ENCODE measurements at regions of chr20 and their contacts with region 1.

Region 1: DNA sequence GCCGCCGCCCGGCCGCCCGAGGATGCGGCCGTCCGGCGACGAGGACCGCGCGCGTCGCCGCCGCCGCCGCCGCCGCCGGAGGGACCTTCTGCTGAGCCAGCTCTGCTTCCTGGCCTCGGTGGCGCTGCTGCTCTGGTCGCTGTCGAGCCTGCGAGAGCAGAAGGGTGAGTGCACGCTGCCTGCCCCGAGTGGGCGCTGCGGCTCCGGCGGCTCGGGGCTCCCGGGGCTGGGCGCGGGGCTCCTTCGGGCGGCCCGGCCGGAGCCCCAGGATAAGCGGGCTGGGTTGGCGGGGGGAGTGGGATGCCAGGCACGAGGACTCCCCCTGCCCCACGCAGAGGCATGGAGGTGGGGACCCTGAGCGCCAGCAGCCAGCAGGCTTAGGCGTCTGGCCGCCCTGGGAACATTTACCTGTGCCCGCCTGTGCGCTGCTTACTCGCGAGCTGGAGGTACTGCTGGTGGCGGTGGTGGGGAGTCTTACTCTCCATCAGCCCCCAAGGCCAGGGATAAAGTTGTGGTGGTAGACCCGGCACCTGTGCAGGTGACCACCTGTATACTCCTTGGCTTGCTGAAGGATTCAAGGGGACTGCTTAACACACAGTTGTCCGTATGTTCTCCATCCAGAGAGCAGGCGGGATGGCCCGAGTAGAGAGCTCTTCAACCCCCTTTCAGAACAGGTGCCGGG is 520 bp downstream of the SLC24A3 start:
- DNase-seq: peak; percentile 79 to 81
- H3K4me3 ChIP-seq: peak overlapping the region; percentile 46 to 87
- H3K27ac ChIP-seq: peak overlapping the region; percentile 91
- H3K4me1 ChIP-seq: peaks cover 7 to 16% of the 10 kb centered on the region in 2 donors
- H3K27me3 ChIP-seq: no peaks in the 10 kb centered on the region
- CTCF ChIP-seq: peak; percentile 31 to 84 (median 65)
- POLR2A ChIP-seq: peak in 1 of 2 donors; percentile 33

Region 2: DNA sequence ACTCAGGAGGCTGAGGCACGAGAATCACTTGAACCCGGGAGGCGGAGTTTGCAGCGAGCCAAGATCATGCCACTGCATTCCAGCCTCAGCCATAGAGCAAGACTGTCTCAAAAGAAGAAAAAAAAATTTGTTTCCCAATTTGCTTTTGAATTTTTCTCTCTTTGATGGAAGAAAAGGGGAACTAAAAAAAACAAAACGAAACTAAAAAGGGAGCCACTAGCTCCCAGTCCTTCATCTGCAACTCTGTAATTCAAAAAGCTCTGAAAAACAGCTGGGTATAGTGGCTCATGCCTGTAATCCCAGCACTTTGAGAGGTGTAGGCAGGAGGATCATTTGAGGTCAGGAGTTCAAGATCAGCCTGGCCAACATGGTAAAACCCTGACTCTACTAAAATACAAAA is 1164.8 kb before region 1 on chr20:
- intact Hi-C with region 1: no loop called
- DNase-seq: no peak
- H3K4me3 ChIP-seq: no peak overlapping the region
- H3K27ac ChIP-seq: no peak overlapping the region
- H3K4me1 ChIP-seq: no peaks in the 10 kb centered on the region
- H3K27me3 ChIP-seq: no peaks in the 10 kb centered on the region
- CTCF ChIP-seq: no peak
- POLR2A ChIP-seq: no peak

Region 3: DNA sequence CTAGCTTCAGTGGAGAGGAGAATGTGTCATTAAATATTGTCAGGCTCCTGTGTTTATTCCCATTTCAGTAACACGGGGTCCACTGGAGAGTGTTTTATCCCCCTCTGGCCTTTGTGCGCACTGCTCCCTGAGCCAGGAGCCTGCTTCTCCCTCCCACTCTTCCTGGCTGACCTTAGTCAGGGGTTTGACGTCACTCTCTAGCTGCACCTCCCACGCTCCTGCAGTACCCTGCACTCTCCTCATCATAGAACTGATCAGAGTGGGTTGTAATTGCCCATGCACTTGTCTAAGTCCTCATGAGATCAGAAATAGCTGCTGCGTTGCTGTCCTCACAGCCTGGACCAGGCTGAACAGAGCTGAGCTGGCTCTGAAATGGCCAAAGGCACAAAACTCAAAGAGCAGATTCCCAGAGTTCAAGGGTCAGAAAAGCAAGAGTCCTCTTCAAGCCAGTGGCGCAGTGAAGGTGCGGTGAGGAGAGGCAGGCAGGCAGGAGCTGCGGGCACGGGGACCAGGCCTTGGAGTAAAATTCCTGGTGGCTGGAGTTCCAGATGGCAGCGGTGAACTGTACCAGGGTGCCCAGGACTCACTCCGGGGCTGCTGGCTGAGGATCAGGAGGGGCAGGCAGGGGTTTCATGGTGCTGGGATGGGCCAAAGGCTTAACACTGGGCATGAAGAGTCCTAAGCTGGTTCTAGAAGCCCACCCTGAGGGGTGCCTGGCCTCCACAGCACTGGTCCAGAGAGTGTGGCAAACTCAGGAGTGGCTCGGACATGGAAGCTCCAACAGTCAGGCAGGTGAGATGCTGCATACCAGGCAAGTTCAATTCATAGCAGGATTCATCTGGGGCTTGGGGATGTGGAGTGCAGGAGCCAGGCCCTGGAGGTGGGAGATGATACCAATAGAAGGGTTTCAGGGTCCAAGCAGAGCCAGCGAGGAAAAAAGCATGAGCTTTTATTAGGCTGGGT is 228.4 kb before region 1 on chr20:
- intact Hi-C with region 1: loop called (anchors 10 kb)
- DNase-seq: peak; percentile 83 to 88
- H3K4me3 ChIP-seq: no peak overlapping the region
- H3K27ac ChIP-seq: peak overlapping the region; percentile 77 to 86
- H3K4me1 ChIP-seq: peaks cover 12 to 14% of the 10 kb centered on the region in 2 donors
- H3K27me3 ChIP-seq: no peaks in the 10 kb centered on the region
- CTCF ChIP-seq: peak in 2 of 4 experiments; percentile 12 to 49
- POLR2A ChIP-seq: no peak

Region 4: DNA sequence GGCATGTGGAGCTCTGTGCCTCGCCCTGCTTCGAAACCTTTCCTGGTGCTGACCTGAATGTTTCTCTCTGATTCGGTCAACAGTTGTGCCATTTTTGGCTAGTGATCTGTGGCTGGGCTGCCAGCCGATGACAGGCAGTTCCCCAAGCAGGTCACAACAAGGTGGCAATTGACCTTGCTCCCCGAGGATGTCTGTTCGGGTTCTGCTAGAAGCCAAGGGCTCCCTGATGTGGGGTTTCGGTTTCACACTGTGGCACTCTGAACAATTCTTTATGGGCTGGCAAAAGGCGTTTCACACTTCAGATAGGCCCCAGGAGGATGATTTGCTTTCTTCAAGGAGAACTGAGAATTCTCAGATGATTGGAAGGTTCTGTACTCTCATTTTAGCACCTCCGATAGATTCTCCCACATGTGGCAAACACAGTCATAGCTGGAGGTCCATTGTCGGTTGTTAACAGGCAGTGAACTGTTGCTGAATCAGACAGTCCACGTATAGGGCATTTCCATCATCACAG is 135.0 kb after region 1 on chr20:
- intact Hi-C with region 1: no loop called
- DNase-seq: no peak
- H3K4me3 ChIP-seq: no peak overlapping the region
- H3K27ac ChIP-seq: no peak overlapping the region
- H3K4me1 ChIP-seq: no peaks in the 10 kb centered on the region
- H3K27me3 ChIP-seq: no peaks in the 10 kb centered on the region
- CTCF ChIP-seq: no peak
- POLR2A ChIP-seq: no peak

Region 5: GRCh38 chr20:19661717-19662636 is 449.0 kb after region 1 on chr20:
- intact Hi-C with region 1: loop called (anchors 5 kb)
- DNase-seq: peak; percentile 75 to 77
- H3K4me3 ChIP-seq: no peak overlapping the region
- H3K27ac ChIP-seq: peak overlapping the region; percentile 35 to 49
- H3K4me1 ChIP-seq: peaks cover 0 to 2% of the 10 kb centered on the region in 2 donors
- H3K27me3 ChIP-seq: no peaks in the 10 kb centered on the region
- CTCF ChIP-seq: peak; percentile 92 to 99 (median 96)
- POLR2A ChIP-seq: no peak